ENCODE measurements at regions of chr10 and their contacts with region 1.

Region 1: DNA sequence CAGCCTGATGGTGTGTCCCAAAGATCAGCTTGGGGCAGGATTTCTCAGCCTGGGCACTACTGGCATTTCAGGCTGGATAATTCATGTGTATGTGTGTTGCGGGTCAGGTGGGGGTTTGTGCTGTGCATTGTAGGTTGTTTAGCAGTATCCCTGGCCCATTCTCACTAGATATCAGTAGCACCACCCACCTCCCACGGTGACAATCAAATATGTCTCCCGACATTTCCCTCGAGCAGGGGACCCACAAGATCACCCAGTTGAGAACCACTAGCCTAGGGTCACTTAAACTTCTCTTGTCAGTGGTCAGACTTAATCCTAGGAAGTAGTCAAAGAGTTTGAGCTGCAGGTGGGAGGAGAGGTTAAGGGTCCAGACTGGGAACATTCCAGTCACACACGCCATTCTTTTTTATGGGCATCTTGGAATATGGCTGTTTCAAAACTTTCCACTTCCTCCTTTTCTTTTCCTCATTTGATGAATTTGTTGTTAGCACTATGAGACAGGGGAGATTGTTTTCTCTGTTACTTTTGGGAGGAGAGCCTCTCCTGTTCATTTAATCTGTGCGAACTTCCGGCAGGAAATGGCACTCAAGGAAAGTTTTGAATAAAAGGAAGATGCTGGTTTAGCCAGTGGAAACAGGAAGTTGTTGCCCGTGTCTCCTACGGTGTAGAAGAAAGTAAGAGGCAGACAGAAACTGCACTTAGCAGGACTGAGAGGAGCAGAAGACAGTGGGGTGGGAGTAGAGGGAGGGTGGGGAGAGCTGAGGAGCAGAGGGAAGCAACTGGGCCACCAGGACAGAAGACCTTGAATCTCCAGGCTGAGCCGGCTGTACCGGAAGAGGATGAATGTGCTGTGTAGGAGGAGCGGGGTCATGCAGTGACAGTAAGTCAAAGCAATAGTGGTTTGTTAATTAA is 17.6 kb upstream of the EXOC6 start:
- DNase-seq: peak; percentile 61
- H3K4me3 Mint-ChIP-seq: peak overlapping the region; percentile 77
- H3K27ac Mint-ChIP-seq: peak overlapping the region; percentile 85
- H3K4me1 Mint-ChIP-seq: peaks cover 10% of the 10 kb centered on the region
- H3K27me3 Mint-ChIP-seq: no peaks in the 10 kb centered on the region

Region 2: GRCh38 chr10:92699518-92700381 is 131.0 kb before region 1 on chr10:
- intact Hi-C with region 1: no loop called
- DNase-seq: peak; percentile 79
- H3K4me3 Mint-ChIP-seq: peak overlapping the region; percentile 86
- H3K27ac Mint-ChIP-seq: no peak overlapping the region
- H3K4me1 Mint-ChIP-seq: peaks cover 23% of the 10 kb centered on the region
- H3K27me3 Mint-ChIP-seq: peaks cover 76% of the 10 kb centered on the region

Region 3: GRCh38 chr10:92989250-92989649 is 158.5 kb after region 1 on chr10:
- intact Hi-C with region 1: loop called (anchors 5 kb)
- DNase-seq: no peak
- H3K4me3 Mint-ChIP-seq: no peak overlapping the region
- H3K27ac Mint-ChIP-seq: peak overlapping the region; percentile 20
- H3K4me1 Mint-ChIP-seq: peaks cover 17% of the 10 kb centered on the region
- H3K27me3 Mint-ChIP-seq: no peaks in the 10 kb centered on the region

Region 4: GRCh38 chr10:93615576-93616235 is 785.0 kb after region 1 on chr10:
- intact Hi-C with region 1: no loop called
- DNase-seq: no peak
- H3K4me3 Mint-ChIP-seq: no peak overlapping the region
- H3K27ac Mint-ChIP-seq: no peak overlapping the region
- H3K4me1 Mint-ChIP-seq: peaks cover 4% of the 10 kb centered on the region
- H3K27me3 Mint-ChIP-seq: peaks cover 10% of the 10 kb centered on the region

Measured in activated CD4-positive, alpha-beta T cell treated with anti-CD3 and anti-CD28 coated beads, Interleukin-2, amount 10 ng/mL, durations not matched to agents 24 days and 14 days (primary cell).